ENCODE measurements at regions of chr14 and their contacts with region 1.

Region 1: GRCh38 chr14:79781882-79782281 is 429.4 kb downstream of the DIO2 start:
- DNase-seq: no peak
- H3K4me3 ChIP-seq: no peak overlapping the region
- H3K27ac ChIP-seq: no peak overlapping the region
- H3K4me1 ChIP-seq: no peaks in the 10 kb centered on the region
- H3K27me3 ChIP-seq: no peaks in the 10 kb centered on the region
- CTCF ChIP-seq: no peak
- POLR2A ChIP-seq: no peak

Region 2: GRCh38 chr14:79766511-79766910 is 15.4 kb before region 1 on chr14:
- intact Hi-C with region 1: no loop called
- DNase-seq: no peak
- H3K4me3 ChIP-seq: no peak overlapping the region
- H3K27ac ChIP-seq: no peak overlapping the region
- H3K4me1 ChIP-seq: no peaks in the 10 kb centered on the region
- H3K27me3 ChIP-seq: no peaks in the 10 kb centered on the region
- CTCF ChIP-seq: no peak
- POLR2A ChIP-seq: no peak

Region 3: GRCh38 chr14:79829405-79830166 is 47.7 kb after region 1 on chr14:
- intact Hi-C with region 1: loop called (anchors 2 kb)
- DNase-seq: no peak
- H3K4me3 ChIP-seq: no peak overlapping the region
- H3K27ac ChIP-seq: no peak overlapping the region
- H3K4me1 ChIP-seq: no peaks in the 10 kb centered on the region
- H3K27me3 ChIP-seq: no peaks in the 10 kb centered on the region
- CTCF ChIP-seq: no peak
- POLR2A ChIP-seq: no peak

Measured in breast epithelium (tissue), 4 donors.